ENCODE measurements at regions of chr6 and their contacts with region 1.

Region 1: DNA sequence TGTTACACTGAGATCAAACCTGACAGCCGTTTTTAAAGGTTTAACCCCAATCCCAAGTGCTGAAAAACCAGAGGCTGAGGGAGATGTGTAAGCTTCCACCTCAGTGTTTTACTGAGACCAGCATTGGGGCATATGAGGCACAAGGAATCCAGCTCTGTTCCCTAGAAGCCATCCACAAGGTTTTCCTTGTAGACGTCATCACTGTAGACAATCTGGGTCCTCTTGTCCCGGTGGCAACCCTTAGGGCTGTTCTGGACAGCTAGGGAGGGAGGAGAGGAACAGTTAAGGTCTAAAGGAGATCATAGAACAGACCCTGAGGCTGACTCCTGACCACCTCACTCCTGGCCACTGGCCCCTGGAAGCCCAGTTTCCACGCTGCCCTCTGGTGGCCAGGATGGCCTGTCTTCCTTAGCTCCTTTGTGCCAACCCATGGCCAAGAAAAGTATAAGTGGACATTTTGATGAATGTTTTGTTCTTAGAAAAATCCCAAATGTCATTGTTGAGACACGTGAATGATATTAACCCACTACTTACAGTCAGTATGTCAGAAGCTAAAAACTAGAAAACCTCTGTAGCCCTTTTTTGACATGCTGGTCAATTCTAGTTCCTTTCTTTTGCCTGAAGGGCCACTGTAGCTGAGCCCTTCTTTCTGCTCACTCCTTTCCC is 6.4 kb downstream of the CFB start:
- H3K4me3 ChIP-seq: no peak overlapping the region
- H3K27ac ChIP-seq: no peak overlapping the region
- H3K4me1 ChIP-seq: no peaks in the 10 kb centered on the region
- CTCF ChIP-seq: peak; percentile 77

Region 2: GRCh38 chr6:31888276-31889258 is 63.7 kb before region 1 on chr6:
- CTCF ChIA-PET with region 1: interaction called, 12 read pairs
- POLR2A ChIA-PET with region 1: interaction called, 3 read pairs
- H3K4me3 ChIP-seq: no peak overlapping the region
- H3K27ac ChIP-seq: no peak overlapping the region
- H3K4me1 ChIP-seq: no peaks in the 10 kb centered on the region
- CTCF ChIP-seq: peak; percentile 63; the same call in 1 of the 2 replicates

Region 3: DNA sequence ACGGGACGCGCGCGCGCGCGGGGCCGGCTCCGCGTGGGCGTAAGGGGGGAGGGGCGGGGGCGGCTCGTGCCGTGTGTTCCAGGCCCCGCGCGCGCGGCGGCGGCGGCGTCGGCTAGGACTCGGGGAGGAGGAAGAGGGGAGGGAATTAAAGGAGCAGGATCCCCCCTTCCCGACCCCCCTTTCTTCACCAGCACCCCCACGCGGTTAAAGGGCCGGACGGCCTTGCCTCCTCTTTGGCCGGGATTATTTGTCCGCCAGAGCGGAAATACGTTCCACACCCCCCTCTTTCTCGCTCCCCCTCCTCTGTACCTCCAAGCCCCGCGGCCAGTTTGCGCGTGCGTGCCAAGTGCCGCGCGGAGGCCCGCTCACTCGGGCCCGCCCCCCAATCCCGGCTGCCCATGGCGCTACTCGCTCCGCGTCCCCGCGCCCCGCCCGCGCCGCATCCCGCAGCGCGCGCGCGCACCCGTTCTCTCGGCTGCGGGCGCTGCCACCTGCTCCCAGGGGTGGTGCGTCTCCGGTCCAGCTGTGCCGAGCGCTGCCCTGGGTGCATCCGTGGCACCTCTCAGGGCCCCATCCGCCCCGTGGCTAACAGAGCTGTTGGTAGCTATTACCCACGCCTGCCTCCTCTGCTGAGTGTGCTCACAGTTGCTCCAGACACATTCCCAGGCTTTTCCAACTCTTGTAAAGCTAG is 50.2 kb before region 1 on chr6 and contains the start of gene ZBTB12:
- CTCF ChIA-PET with region 1: interaction called, 29 read pairs
- POLR2A ChIA-PET with region 1: interaction called, 9 read pairs
- H3K4me3 ChIP-seq: peak within 1 kb of the TSS; percentile 62
- H3K27ac ChIP-seq: peak within 1 kb of the TSS; percentile 9
- H3K4me1 ChIP-seq: peaks cover 9% of the 10 kb centered on the region
- CTCF ChIP-seq: peak; percentile 57; the same call in 1 of the 2 replicates

Region 4: GRCh38 chr6:31927863-31928671 is 24.2 kb before region 1 on chr6:
- CTCF ChIA-PET with region 1: interaction called, 17 read pairs
- POLR2A ChIA-PET with region 1: interaction called, 3 read pairs
- H3K4me3 ChIP-seq: no peak overlapping the region
- H3K27ac ChIP-seq: no peak overlapping the region
- H3K4me1 ChIP-seq: no peaks in the 10 kb centered on the region
- CTCF ChIP-seq: no peak

Region 5: GRCh38 chr6:31940256-31940664 is 12.0 kb before region 1 on chr6:
- CTCF ChIA-PET with region 1: interaction called, 70 read pairs
- POLR2A ChIA-PET with region 1: interaction called, 17 read pairs
- H3K4me3 ChIP-seq: no peak overlapping the region
- H3K27ac ChIP-seq: no peak overlapping the region
- H3K4me1 ChIP-seq: peaks cover 5% of the 10 kb centered on the region; the same call in 1 of the 2 replicates
- CTCF ChIP-seq: no peak

Region 6: DNA sequence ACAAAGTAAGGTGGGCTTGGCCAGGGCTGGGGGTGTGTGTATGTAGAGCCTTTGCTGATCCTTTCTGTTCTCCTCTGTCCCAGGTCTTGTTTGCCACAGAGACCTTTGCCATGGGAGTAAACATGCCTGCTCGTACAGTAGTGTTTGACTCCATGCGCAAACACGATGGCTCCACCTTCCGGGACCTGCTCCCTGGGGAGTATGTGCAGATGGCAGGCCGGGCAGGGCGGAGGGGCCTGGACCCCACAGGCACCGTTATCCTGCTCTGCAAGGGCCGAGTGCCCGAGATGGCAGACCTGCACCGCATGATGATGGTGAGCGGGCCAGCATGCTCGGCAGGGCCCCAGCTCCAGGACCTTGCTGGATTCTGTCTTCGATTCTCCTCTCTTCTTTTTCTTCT is 13.4 kb after region 1 on chr6:
- CTCF ChIA-PET with region 1: interaction called, 20 read pairs
- POLR2A ChIA-PET with region 1: interaction called, 64 read pairs
- H3K4me3 ChIP-seq: no peak overlapping the region
- H3K27ac ChIP-seq: no peak overlapping the region
- H3K4me1 ChIP-seq: no peaks in the 10 kb centered on the region; the same call in 1 of the 2 replicates
- CTCF ChIP-seq: no peak

Region 7: GRCh38 chr6:31971993-31972708 is 19.9 kb after region 1 on chr6 and contains the start of gene DXO:
- CTCF ChIA-PET with region 1: interaction called, 20 read pairs
- POLR2A ChIA-PET with region 1: interaction called, 64 read pairs
- H3K4me3 ChIP-seq: peak within 1 kb of the TSS; percentile 83
- H3K27ac ChIP-seq: peak within 1 kb of the TSS; percentile 74
- H3K4me1 ChIP-seq: peaks cover 5% of the 10 kb centered on the region
- CTCF ChIP-seq: no peak

Region 8: DNA sequence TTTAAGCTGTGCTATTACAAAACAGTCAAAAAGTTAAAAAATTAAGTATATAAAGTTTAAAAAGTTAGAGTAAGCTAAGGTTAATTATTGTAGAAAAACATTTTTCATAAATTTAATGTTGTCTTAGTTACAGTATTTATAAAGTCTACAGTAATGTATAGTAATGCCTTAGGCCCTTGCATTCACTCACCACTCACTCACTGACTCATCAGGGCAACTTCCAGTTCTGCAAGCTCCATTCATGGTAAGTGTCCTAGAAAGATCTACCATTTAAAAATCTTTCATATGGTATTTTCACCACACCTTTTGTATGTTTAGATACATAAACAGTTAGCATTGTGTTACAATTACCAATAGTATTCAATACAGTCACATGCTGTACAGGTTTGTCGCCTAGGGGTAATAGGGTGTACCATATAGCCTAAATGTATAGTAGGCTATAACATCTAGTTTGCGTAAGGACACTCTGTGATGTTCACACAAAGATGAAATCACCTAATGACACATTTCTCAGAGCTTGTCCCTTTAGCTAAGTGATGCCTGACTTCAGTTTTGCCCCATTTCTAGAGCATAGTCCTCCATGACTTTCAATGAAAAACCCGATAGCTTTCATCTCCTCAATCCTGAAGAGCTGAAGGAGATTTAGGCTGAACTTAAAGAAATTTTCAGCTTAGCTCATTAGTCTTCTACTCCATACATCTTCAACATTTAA is 472.5 kb after region 1 on chr6:
- CTCF ChIA-PET with region 1: no interaction called
- POLR2A ChIA-PET with region 1: no interaction called
- H3K4me3 ChIP-seq: no peak overlapping the region
- H3K27ac ChIP-seq: no peak overlapping the region
- H3K4me1 ChIP-seq: no peaks in the 10 kb centered on the region
- CTCF ChIP-seq: no peak

Measured in HEK293 (cell line).